ENCODE measurements at regions of chr9 and their contacts with region 1.

Region 1: GRCh38 chr9:97890038-97890437 is 32.3 kb downstream of the TRMO start:
- H3K4me3 ChIP-seq: no peak overlapping the region
- H3K27ac ChIP-seq: no peak overlapping the region
- H3K4me1 ChIP-seq: no peaks in the 10 kb centered on the region
- CTCF ChIP-seq: no peak

Region 2: DNA sequence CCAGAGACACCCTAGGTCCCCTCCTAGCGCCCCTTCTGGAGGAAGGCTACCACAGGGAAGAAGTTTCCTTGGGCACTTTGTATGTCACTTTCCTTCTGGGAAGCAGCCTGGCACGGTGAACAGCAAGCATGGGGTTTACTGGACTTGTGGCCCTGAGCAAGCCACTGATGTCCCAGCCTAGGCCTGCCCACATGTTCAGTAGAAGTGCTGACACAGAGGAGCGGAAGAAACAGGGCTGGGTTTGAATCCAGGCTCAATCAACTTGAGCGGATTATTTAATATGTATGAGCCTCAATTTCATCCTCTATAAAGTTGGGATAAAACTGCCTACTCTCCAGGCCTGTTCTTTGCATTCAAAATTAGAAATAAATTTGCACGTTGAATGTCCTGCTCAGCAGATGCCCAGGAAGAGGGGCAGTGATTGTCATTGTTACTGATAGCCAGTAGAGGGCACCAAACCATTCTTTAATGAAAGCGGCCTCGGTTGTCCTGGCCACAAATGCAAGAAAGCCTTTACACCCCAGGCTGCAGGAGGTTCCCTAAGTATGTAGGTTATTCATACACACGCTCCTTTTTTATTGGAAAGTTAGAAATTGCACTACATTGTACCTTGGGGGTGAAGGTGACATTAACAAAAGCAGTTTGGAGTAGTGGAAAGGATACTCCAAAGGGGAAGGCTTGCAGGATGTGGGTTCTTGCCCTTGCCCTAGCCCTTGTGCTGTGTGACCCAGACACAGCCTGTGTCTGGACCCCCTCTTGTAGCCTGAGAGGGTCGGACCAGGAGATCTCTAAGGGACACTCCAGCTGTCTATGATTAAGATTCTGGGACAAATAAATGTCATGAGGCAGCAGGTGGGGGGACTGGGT is 179.4 kb before region 1 on chr9:
- CTCF ChIA-PET with region 1: interaction called, 10 read pairs
- POLR2A ChIA-PET with region 1: no interaction called
- H3K4me3 ChIP-seq: no peak overlapping the region
- H3K27ac ChIP-seq: no peak overlapping the region
- H3K4me1 ChIP-seq: no peaks in the 10 kb centered on the region
- CTCF ChIP-seq: no peak; the same call in 1 of the 2 replicates

Region 3: GRCh38 chr9:97873877-97874276 is 16.2 kb before region 1 on chr9:
- CTCF ChIA-PET with region 1: interaction called, 28 read pairs
- POLR2A ChIA-PET with region 1: no interaction called
- H3K4me3 ChIP-seq: no peak overlapping the region
- H3K27ac ChIP-seq: no peak overlapping the region
- H3K4me1 ChIP-seq: no peaks in the 10 kb centered on the region
- CTCF ChIP-seq: no peak

Region 4: DNA sequence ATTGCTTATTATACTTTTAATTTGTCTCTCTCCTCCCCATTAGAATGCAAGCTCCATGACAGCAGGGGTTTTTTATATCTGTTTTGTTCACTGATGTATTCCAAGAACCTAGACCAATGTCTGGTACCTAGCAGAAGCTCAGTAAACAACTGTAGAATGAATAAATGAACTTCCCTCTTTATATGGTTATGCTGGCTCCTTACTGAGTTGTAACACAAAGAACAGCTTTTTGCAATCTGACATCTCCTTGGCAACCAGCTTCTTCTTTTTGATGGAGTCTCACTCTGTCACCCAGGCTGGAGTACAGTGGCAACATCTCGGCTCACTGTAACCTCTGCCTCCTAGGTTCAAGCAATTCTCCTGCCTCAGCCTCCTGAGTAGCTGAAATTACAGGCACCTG is 18.7 kb after region 1 on chr9:
- CTCF ChIA-PET with region 1: interaction called, 132 read pairs
- POLR2A ChIA-PET with region 1: no interaction called
- H3K4me3 ChIP-seq: no peak overlapping the region
- H3K27ac ChIP-seq: no peak overlapping the region
- H3K4me1 ChIP-seq: no peaks in the 10 kb centered on the region
- CTCF ChIP-seq: no peak

Region 5: GRCh38 chr9:97934321-97935115 is 44.5 kb after region 1 on chr9:
- CTCF ChIA-PET with region 1: no interaction called
- POLR2A ChIA-PET with region 1: no interaction called
- H3K4me3 ChIP-seq: no peak overlapping the region
- H3K27ac ChIP-seq: no peak overlapping the region
- H3K4me1 ChIP-seq: no peaks in the 10 kb centered on the region
- CTCF ChIP-seq: no peak